ENCODE measurements at regions of chr17 and their contacts with region 1.

Region 1: GRCh38 chr17:76467366-76467765 is at the start of gene AANAT:
- DNase-seq: peak in 1 of 3 donors; percentile 38
- ATAC-seq: no peak
- H3K4me3 ChIP-seq: no peak within 1 kb of the TSS
- H3K4me1 ChIP-seq: no peaks in the 10 kb centered on the region
- CTCF ChIP-seq: no peak
- total RNA-seq, gene AANAT: not detected

Region 2: GRCh38 chr17:76506408-76507349 is 39.3 kb after region 1 on chr17:
- intact Hi-C with region 1: loop called (anchors 1 to 2 kb)
- DNase-seq: peak; percentile 87 to 91 (median 91)
- ATAC-seq: peak; percentile 87
- H3K4me3 ChIP-seq: no peak overlapping the region
- H3K4me1 ChIP-seq: peaks cover 4% of the 10 kb centered on the region
- CTCF ChIP-seq: peak; percentile 83

Region 3: GRCh38 chr17:76540381-76541300 is 73.3 kb after region 1 on chr17:
- intact Hi-C with region 1: no loop called
- DNase-seq: peak; percentile 88 to 89 (median 89)
- ATAC-seq: peak; percentile 95
- H3K4me3 ChIP-seq: no peak overlapping the region
- H3K4me1 ChIP-seq: peaks cover 22% of the 10 kb centered on the region
- CTCF ChIP-seq: no peak

Measured in mucosa of descending colon (tissue), 3 donors.